ENCODE measurements at regions of chr16 and their contacts with region 1.

Region 1: GRCh38 chr16:35525734-35526594 is 2066.6 kb downstream of the TP53TG3F start:
- DNase-seq: no peak
- H3K4me3 ChIP-seq: no peak overlapping the region
- H3K27ac ChIP-seq: no peak overlapping the region
- H3K4me1 ChIP-seq: no peaks in the 10 kb centered on the region
- H3K27me3 ChIP-seq: no peaks in the 10 kb centered on the region
- CTCF ChIP-seq: no peak

Region 2: GRCh38 chr16:35440875-35441274 is 85.1 kb before region 1 on chr16:
- CTCF ChIA-PET with region 1: no interaction called
- dilution Hi-C with region 1: no loop called
- in situ Hi-C with region 1: no loop called
- intact Hi-C with region 1: no loop called
- DNase-seq: no peak
- H3K4me3 ChIP-seq: no peak overlapping the region
- H3K27ac ChIP-seq: no peak overlapping the region
- H3K4me1 ChIP-seq: no peaks in the 10 kb centered on the region
- H3K27me3 ChIP-seq: no peaks in the 10 kb centered on the region
- CTCF ChIP-seq: no peak

Region 3: DNA sequence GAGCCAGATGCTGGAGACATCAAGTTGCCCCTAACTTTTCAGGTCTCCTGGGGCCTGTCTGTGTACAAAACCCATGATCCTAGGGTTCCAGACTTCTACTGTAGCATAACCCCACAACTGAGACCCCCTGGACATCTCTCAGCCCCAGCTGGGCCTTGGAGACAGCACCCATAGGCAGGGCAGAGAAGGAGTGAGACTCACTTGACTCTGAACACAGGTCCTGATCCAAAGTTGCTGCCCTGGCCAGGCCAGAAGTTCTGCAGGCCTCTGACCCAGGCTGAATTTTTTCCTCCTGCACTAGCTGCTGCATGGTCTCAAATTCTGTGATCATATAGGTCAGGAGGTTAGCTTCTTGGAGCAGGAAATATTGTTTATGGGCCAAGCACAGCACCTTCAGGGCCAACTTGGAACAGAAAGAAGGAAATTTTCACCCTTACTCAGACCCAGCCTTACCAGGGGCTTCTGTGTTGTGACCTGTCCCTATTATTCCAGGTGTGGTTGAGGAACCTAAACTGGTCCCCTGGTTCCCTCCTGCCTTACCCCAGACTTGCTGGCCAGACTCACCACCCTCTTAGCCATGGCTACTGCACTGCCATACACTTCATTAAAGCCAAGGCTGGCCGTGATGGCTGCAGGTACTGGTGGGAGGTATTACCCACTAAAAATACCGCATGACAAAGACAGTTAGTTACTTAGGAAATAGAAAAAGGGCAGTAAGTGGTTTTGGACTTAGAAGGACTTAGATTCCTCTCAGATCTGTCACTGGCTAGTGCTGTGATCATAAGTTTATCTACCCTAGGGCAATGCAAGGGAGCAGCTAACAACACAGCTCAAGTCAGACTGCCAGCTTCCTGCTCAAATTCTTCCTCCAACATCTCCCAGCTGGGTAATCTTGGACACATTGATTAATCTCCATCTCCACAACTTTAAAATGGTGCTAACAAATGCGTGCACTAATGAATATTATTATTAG is 113.6 kb after region 1 on chr16:
- CTCF ChIA-PET with region 1: no interaction called
- dilution Hi-C with region 1: loop called (anchors 10 kb)
- in situ Hi-C with region 1: no loop called
- intact Hi-C with region 1: no loop called
- DNase-seq: no peak
- H3K4me3 ChIP-seq: no peak overlapping the region
- H3K27ac ChIP-seq: no peak overlapping the region
- H3K4me1 ChIP-seq: no peaks in the 10 kb centered on the region
- H3K27me3 ChIP-seq: no peaks in the 10 kb centered on the region
- CTCF ChIP-seq: no peak

Measured in mammary epithelial cell (primary cell).